Activated CD4-positive, alpha-beta T cell treated with anti-CD3 and anti-CD28 coated beads, Interleukin-2, amount 10 ng/mL, durations not matched to agents 7 days and 5 days (primary cell): ENCODE measurements at regions of chr3 and their contacts with region 1.

Region 1: GRCh38 chr3:37956723-37957528 is 33.7 kb upstream of the VILL start:
- DNase-seq: no peak
- H3K4me3 Mint-ChIP-seq: no peak overlapping the region
- H3K27ac Mint-ChIP-seq: peak overlapping the region; percentile 91
- H3K4me1 Mint-ChIP-seq: peaks cover 27% of the 10 kb centered on the region
- H3K27me3 Mint-ChIP-seq: no peaks in the 10 kb centered on the region

Region 2: GRCh38 chr3:37967260-37967881 is 10.4 kb after region 1 on chr3:
- CTCF ChIA-PET with region 1: interaction called, 26 read pairs
- POLR2A ChIA-PET with region 1: interaction called, 3 read pairs
- DNase-seq: peak; percentile 71
- H3K4me3 Mint-ChIP-seq: no peak overlapping the region
- H3K27ac Mint-ChIP-seq: no peak overlapping the region
- H3K4me1 Mint-ChIP-seq: no peaks in the 10 kb centered on the region
- H3K27me3 Mint-ChIP-seq: no peaks in the 10 kb centered on the region